ENCODE measurements at regions of chr7 and their contacts with region 1.

Region 1: GRCh38 chr7:867672-868486 is 8.5 kb upstream of the GET4 start:
- DNase-seq: peak; percentile 90 to 93
- ATAC-seq: peak; percentile 96

Region 2: DNA sequence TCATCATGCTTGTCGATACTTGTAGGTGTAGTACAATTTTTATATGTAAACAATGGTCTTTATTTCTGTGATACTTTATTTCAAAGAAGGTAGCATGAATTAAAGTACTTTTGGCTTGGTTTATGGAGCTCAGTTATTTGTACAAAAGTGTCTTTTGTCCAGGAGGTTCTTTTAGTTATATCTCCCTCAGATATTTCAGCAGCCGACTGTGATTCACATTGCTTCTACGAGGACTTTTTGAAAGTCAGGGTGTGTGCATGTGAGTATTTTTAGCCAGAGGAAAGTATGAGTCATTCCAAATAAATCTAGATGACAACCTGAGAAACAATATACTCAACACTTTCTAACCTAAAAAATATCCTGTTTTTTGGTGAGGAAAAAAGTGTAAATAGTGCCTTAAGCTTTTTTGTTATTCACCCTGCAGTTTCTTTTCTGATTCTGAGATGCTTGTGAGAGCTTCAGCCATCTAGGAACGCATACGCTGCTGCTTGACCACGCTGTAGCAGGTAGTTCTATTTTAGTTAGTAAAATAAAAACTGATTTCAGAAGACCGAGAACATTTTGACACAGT is 36.2 kb before region 1 on chr7:
- intact Hi-C with region 1: loop called in 1 of 2 experiments (anchors 2 kb)
- DNase-seq: no peak
- ATAC-seq: peak; percentile 48

Region 3: DNA sequence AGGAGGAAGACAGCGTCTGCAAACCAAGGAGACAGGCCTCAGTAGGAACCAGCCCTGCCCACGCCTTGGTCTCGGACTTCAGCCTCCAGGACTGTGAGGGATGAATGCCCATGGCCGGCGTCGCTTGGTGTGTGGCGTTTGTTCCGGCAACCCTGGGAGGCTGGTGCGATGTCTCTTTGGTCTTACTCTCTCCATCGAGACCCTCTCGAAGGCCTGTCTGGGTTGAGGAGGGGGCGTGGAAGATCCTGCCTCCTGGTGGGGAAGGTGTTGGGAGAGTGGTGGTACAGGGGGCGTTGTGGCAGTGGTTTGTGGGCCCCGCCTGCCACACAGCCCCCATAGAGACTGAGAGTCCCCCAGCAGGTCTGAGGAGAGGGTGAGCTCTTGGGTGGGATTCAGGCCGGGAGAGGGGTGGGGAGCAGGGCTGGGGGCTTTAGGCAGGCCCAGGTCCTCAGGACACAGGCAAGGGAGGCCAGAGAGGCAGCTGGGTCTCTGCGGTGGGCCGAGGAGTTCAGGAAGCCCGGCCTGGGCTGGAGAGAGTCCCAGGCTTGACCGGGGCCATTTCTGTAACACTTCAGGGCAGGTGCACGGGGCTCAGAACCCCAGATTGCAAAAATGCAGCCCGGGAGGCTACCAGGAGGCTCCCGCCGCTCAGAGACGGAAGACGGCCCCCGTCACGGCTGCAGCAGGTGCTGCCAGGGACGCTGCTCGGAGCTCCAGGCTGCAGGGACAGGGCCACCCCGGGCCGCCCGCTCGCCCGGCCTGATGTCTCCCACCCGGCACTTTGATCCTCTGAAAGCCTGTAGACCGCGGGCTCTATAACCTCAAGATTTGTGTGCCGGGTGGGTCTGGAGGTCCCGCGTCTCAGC is 735.7 kb after region 1 on chr7:
- intact Hi-C with region 1: no loop called
- DNase-seq: no peak
- ATAC-seq: no peak

Measured in left colon (tissue), 2 donors.